ENCODE measurements at regions of chr9 and their contacts with region 1.

Region 1: GRCh38 chr9:71819115-71819739 is 50.9 kb upstream of the CEMIP2 start:
- DNase-seq: no peak
- ATAC-seq: no peak
- H3K4me3 Mint-ChIP-seq: no peak overlapping the region
- H3K27ac Mint-ChIP-seq: no peak overlapping the region
- H3K4me1 Mint-ChIP-seq: peaks cover 31% of the 10 kb centered on the region
- H3K27me3 Mint-ChIP-seq: no peaks in the 10 kb centered on the region
- CTCF ChIP-seq: peak; percentile 59

Region 2: DNA sequence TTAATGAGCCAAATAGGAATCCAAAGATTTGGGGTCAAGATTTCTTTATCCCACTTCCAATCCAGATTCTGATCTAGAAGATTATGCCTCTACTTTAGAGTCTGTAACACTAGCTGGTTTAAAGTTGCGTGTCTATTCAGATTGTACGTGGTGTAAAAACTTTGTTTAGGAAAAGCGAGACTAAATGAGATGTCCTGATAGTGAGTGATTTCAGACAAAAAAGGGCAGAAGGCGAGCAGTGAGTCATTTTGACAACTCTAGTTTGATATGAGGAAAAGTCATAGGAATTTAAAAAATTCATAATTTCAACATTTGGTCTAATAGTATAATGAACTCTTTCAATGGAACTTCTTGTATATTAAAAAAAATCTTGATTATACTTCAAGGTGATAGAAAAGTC is 1285.2 kb before region 1 on chr9:
- CTCF ChIA-PET with region 1: no interaction called
- POLR2A ChIA-PET with region 1: no interaction called
- intact Hi-C with region 1: no loop called
- DNase-seq: no peak
- ATAC-seq: no peak
- H3K4me3 Mint-ChIP-seq: no peak overlapping the region
- H3K27ac Mint-ChIP-seq: no peak overlapping the region
- H3K4me1 Mint-ChIP-seq: no peaks in the 10 kb centered on the region
- H3K27me3 Mint-ChIP-seq: peaks cover 10% of the 10 kb centered on the region
- CTCF ChIP-seq: no peak

Region 3: GRCh38 chr9:71285191-71285656 is 534.0 kb before region 1 on chr9:
- CTCF ChIA-PET with region 1: interaction called, 14 read pairs
- POLR2A ChIA-PET with region 1: no interaction called
- intact Hi-C with region 1: no loop called
- DNase-seq: no peak
- ATAC-seq: peak; percentile 61
- H3K4me3 Mint-ChIP-seq: no peak overlapping the region
- H3K27ac Mint-ChIP-seq: no peak overlapping the region
- H3K4me1 Mint-ChIP-seq: no peaks in the 10 kb centered on the region
- H3K27me3 Mint-ChIP-seq: peaks cover 2% of the 10 kb centered on the region
- CTCF ChIP-seq: no peak

Region 4: DNA sequence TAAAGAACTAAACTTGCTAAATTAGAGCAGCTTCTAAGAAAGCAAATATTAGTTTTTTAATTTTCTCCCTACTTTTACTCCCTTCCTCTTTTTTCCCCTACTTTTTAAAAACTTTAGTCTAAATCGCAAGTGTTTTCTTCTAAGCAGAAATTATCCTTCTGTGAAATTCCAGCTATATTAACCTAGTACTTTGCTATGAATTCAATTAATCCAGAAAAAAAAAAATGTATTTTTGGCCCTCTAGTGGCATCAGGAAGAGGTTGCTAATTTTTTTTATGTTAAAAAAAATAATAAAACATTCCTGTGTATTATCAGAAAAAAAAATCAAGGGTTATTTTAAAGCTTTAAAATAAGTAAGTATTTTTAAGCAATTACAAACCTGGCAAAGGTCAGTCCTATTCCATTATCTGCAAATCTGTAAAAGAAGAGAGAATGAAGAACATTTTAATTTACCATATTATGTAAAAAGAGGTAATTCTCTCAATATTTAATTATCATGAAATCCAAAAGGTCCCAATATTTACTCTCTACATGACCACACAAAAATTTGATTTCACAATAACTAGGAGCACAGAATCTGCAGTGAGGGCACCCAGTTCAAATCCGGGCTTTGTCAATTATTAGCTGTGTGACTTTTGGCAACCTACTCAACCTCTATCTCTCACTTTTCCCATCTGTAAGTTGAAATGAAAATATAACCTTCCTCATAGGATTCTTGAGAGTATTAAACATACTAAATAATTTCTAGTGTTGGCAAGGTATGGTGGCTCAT is 102.9 kb before region 1 on chr9:
- CTCF ChIA-PET with region 1: interaction called, 9 read pairs
- POLR2A ChIA-PET with region 1: no interaction called
- intact Hi-C with region 1: loop called (anchors 5 kb)
- DNase-seq: no peak
- ATAC-seq: no peak
- H3K4me3 Mint-ChIP-seq: no peak overlapping the region
- H3K27ac Mint-ChIP-seq: no peak overlapping the region
- H3K4me1 Mint-ChIP-seq: no peaks in the 10 kb centered on the region
- H3K27me3 Mint-ChIP-seq: no peaks in the 10 kb centered on the region
- CTCF ChIP-seq: peak; percentile 91

Region 5: DNA sequence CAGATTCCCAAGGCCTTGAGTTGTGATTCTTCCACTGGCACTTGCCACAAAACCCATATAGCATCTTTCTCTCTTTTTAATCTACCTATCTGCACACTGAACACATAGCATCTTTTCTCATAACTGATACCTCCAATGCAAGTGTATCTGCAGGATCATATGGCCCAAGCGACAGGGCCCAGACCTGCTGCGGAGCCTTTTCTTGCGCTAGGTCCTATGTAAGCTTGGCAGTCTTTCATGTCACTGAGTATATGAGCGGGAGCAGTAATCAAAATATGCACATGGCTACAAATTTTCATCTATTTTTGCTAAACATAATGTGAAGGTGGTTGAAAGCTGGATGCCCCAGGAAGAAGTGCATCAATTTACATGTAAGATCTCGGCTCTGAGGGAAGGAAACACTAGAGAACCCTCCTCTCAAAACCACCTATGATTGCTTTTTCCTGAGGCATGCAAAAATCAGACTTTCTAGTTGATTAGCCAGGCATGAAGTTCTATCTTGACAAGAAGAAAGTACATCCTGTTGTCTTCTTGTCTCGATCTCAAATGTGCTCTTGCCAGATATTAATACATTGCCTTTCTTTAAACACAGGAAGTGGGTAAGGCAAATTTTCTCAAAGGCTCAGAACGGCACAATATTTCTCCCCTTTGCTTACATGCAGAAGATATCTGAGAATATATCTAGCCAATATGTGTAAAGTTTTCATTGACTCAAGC is 24.0 kb before region 1 on chr9:
- CTCF ChIA-PET with region 1: interaction called, 19 read pairs
- POLR2A ChIA-PET with region 1: no interaction called
- intact Hi-C with region 1: loop called (anchors 1 kb)
- DNase-seq: no peak
- ATAC-seq: peak; percentile 84
- H3K4me3 Mint-ChIP-seq: peak overlapping the region; percentile 67
- H3K27ac Mint-ChIP-seq: peak overlapping the region; percentile 87
- H3K4me1 Mint-ChIP-seq: peaks cover 79% of the 10 kb centered on the region
- H3K27me3 Mint-ChIP-seq: no peaks in the 10 kb centered on the region
- CTCF ChIP-seq: no peak

Region 6: GRCh38 chr9:71806901-71807307 is 12.3 kb before region 1 on chr9:
- CTCF ChIA-PET with region 1: interaction called, 34 read pairs
- POLR2A ChIA-PET with region 1: interaction called, 7 read pairs
- intact Hi-C with region 1: loop called (anchors 1 kb)
- DNase-seq: no peak
- ATAC-seq: peak; percentile 96
- H3K4me3 Mint-ChIP-seq: no peak overlapping the region
- H3K27ac Mint-ChIP-seq: peak overlapping the region; percentile 57
- H3K4me1 Mint-ChIP-seq: peaks cover 16% of the 10 kb centered on the region
- H3K27me3 Mint-ChIP-seq: no peaks in the 10 kb centered on the region
- CTCF ChIP-seq: peak; percentile 21

Region 7: GRCh38 chr9:72013292-72013760 is 194.1 kb after region 1 on chr9:
- CTCF ChIA-PET with region 1: no interaction called
- POLR2A ChIA-PET with region 1: no interaction called
- intact Hi-C with region 1: no loop called
- DNase-seq: no peak
- ATAC-seq: no peak
- H3K4me3 Mint-ChIP-seq: no peak overlapping the region
- H3K27ac Mint-ChIP-seq: no peak overlapping the region
- H3K4me1 Mint-ChIP-seq: no peaks in the 10 kb centered on the region
- H3K27me3 Mint-ChIP-seq: no peaks in the 10 kb centered on the region
- CTCF ChIP-seq: no peak